ENCODE measurements at regions of chr9 and their contacts with region 1.

Region 1: DNA sequence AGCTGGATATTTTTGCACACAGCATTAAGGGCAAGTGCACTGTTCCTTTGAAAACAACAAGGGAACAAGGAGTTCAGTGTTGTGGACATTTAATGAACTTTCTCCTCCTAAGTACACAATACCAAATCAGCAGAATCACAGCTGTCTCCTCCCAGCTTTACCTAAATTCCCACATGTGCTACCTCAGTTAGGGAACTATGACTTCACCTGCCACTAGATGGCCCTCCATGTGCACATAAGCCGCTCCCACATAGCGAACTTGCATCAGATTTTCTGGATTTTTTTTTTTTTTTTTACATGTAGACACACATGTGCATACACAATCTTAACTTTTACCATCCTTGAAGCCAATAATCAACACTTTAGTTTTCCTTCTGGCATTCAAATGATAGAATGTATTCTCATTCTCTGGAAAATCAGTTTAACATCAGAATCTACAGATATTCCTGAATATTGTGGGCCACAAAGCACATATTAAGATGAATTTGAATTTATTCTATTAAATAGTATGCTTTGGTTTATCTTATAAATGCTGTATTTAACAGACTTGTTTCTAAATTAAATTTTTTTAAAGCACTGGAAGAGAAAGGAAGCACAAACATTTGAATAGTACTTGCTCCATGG is 123.6 kb downstream of the PALM2AKAP2 start:
- DNase-seq: peak; percentile 57 to 90
- H3K4me3 ChIP-seq: no peak overlapping the region
- H3K27ac ChIP-seq: no peak overlapping the region
- H3K4me1 ChIP-seq: peaks cover 0 to 31% (median 9%) of the 10 kb centered on the region in 4 donors
- H3K27me3 ChIP-seq: no peaks in the 10 kb centered on the region
- CTCF ChIP-seq: peak in 5 of 7 experiments; percentile 59 to 86 (median 68)
- EP300 ChIP-seq: no peak
- POLR2A ChIP-seq: no peak

Region 2: GRCh38 chr9:109766336-109766735 is 137.3 kb before region 1 on chr9:
- intact Hi-C with region 1: no loop called
- DNase-seq: no peak
- H3K4me3 ChIP-seq: no peak overlapping the region
- H3K27ac ChIP-seq: no peak overlapping the region
- H3K4me1 ChIP-seq: peaks cover 0 to 3% (median 1%) of the 10 kb centered on the region in 4 donors
- H3K27me3 ChIP-seq: peaks cover 0 to 24% (median 6%) of the 10 kb centered on the region in 3 donors
- CTCF ChIP-seq: no peak
- EP300 ChIP-seq: no peak
- POLR2A ChIP-seq: no peak

Region 3: DNA sequence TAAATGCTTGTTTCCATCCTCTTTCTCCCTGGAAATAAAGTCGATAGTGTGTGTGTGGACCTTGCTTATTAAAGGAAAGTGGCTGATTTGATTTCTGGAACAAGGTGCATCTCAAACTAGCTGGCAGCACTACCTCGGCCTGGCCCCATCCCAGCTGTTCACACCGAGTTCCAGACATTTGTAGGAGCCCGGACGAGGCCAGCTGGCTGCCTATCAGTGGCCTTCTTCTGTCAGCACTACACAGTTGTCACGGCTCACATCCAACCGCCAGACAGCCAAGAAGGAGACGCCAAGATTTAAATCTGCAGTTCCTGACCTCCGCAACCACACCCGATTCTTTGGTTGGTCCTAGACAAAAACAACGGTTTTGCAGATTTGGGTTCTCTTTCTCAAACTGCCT is 60.0 kb before region 1 on chr9:
- intact Hi-C with region 1: no loop called
- DNase-seq: peak in 1 of 2 donors; percentile 43
- H3K4me3 ChIP-seq: no peak overlapping the region
- H3K27ac ChIP-seq: no peak overlapping the region
- H3K4me1 ChIP-seq: no peaks in the 10 kb centered on the region
- H3K27me3 ChIP-seq: no peaks in the 10 kb centered on the region
- CTCF ChIP-seq: no peak
- EP300 ChIP-seq: no peak
- POLR2A ChIP-seq: no peak

Region 4: DNA sequence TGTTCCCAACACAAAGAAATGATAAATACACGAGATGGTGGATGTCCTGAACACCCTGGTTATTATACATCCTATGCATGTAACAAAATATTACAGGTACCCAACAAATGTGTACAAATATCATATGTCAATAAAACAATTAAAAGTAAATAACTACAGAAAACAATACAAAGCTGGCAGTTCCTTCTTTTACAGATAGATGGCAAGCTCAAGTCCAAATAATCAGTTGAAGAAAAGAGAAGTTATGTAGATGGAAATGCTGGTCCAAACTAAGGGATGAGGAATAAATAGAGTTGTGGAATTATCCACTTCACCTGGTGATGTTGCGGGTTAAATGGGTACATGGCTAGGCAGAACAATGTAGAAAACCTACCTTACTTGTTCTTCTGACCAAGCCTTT is 44.2 kb before region 1 on chr9:
- intact Hi-C with region 1: no loop called
- DNase-seq: no peak
- H3K4me3 ChIP-seq: no peak overlapping the region
- H3K27ac ChIP-seq: no peak overlapping the region
- H3K4me1 ChIP-seq: no peaks in the 10 kb centered on the region
- H3K27me3 ChIP-seq: no peaks in the 10 kb centered on the region
- CTCF ChIP-seq: no peak
- EP300 ChIP-seq: no peak
- POLR2A ChIP-seq: no peak

Region 5: DNA sequence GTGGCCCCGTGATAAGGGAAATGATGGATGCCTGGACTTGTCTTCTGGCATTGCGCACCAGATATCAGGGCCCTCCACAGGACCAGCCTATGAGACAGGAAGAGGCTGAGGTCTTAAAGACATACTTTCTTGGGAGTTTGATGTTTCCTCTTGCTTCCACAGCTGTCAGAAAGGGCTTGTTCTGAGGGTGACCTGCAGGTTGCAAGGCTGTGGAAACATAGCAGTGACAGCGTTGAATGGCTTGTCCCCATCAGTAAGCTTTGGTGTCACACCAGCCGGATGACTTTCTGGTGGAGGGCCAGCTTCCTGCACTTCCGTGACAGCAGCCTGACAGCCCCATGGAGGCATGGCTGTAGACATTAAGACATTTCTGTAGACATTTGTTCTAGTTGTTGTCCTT is 161.2 kb after region 1 on chr9:
- intact Hi-C with region 1: loop called (anchors 5 kb)
- DNase-seq: no peak
- H3K4me3 ChIP-seq: no peak overlapping the region
- H3K27ac ChIP-seq: peak overlapping the region in 1 of 5 donors; percentile 26
- H3K4me1 ChIP-seq: peaks cover 0 to 42% (median 22%) of the 10 kb centered on the region in 4 donors
- H3K27me3 ChIP-seq: no peaks in the 10 kb centered on the region
- CTCF ChIP-seq: no peak
- EP300 ChIP-seq: no peak
- POLR2A ChIP-seq: no peak

Measured in stomach (tissue), 19 donors.